Activated naive CD4-positive, alpha-beta T cell treated with anti-CD3 and anti-CD28 coated beads for 36 hours (primary cell): ENCODE measurements at regions of chr5 and their contacts with region 1.

Region 1: GRCh38 chr5:151164686-151165392 is 7.3 kb upstream of the ANXA6 start:
- DNase-seq: peak; percentile 92
- H3K4me3 Mint-ChIP-seq: no peak overlapping the region
- H3K27ac Mint-ChIP-seq: no peak overlapping the region
- H3K4me1 Mint-ChIP-seq: peaks cover 17% of the 10 kb centered on the region
- H3K27me3 Mint-ChIP-seq: no peaks in the 10 kb centered on the region

Region 2: GRCh38 chr5:150801117-150801927 is 363.5 kb before region 1 on chr5:
- CTCF ChIA-PET with region 1: interaction called, 3 read pairs
- intact Hi-C with region 1: loop called (anchors 1 kb)
- DNase-seq: peak; percentile 31
- H3K4me3 Mint-ChIP-seq: no peak overlapping the region
- H3K27ac Mint-ChIP-seq: no peak overlapping the region
- H3K4me1 Mint-ChIP-seq: peaks cover 31% of the 10 kb centered on the region
- H3K27me3 Mint-ChIP-seq: no peaks in the 10 kb centered on the region

Region 3: GRCh38 chr5:151051066-151051930 is 113.5 kb before region 1 on chr5:
- CTCF ChIA-PET with region 1: interaction called, 63 read pairs
- intact Hi-C with region 1: loop called (anchors 1 kb)
- DNase-seq: peak; percentile 85
- H3K4me3 Mint-ChIP-seq: no peak overlapping the region
- H3K27ac Mint-ChIP-seq: peak overlapping the region; percentile 16
- H3K4me1 Mint-ChIP-seq: no peaks in the 10 kb centered on the region
- H3K27me3 Mint-ChIP-seq: no peaks in the 10 kb centered on the region

Region 4: GRCh38 chr5:151126199-151126645 is 38.6 kb before region 1 on chr5:
- CTCF ChIA-PET with region 1: interaction called, 392 read pairs
- intact Hi-C with region 1: loop called (anchors 1 kb)
- DNase-seq: peak; percentile 72
- H3K4me3 Mint-ChIP-seq: no peak overlapping the region
- H3K27ac Mint-ChIP-seq: peak overlapping the region; percentile 90
- H3K4me1 Mint-ChIP-seq: peaks cover 69% of the 10 kb centered on the region
- H3K27me3 Mint-ChIP-seq: no peaks in the 10 kb centered on the region

Region 5: GRCh38 chr5:151183451-151184245 is 18.8 kb after region 1 on chr5:
- CTCF ChIA-PET with region 1: interaction called, 13 read pairs
- intact Hi-C with region 1: no loop called
- DNase-seq: no peak
- H3K4me3 Mint-ChIP-seq: no peak overlapping the region
- H3K27ac Mint-ChIP-seq: no peak overlapping the region
- H3K4me1 Mint-ChIP-seq: peaks cover 11% of the 10 kb centered on the region
- H3K27me3 Mint-ChIP-seq: no peaks in the 10 kb centered on the region

Region 6: DNA sequence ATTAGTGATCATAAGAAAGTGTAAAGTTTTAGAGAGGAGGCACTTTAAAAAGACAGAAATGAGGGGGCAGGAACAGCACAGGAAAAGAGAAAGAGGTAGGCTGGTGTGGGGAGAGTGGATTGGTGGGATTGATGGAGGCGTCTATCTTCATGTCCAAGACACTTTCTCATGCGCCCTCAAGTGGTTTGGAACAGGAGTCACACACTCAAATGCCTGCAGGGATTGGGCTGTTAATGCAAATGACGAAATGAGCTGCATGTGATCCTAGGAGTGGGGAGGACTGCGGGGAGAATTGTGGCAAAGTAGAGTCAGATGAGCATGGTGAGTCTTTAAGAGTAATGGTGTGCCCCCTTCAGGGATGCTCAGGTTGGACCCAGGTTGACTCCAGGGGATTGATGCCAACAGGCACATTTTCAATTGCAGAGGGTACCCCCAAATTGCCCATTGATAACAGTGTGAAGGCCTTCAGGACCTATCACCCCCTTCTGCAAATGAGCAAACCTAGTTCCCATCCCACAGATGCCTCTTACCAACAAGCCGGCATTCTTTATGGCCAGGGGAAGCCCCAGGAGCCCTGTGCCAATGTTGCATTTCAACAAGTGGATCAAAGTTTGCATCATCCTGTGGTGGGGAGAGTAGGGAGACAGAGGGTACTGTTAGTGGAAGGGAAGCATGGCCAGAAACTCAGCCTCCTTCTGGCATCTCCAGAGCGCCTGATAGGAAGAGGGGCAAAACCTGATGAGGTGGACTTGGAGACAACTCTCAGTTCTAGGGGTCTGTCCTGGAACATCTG is 133.4 kb after region 1 on chr5:
- CTCF ChIA-PET with region 1: no interaction called
- intact Hi-C with region 1: loop called (anchors 5 kb)
- DNase-seq: peak; percentile 46
- H3K4me3 Mint-ChIP-seq: no peak overlapping the region
- H3K27ac Mint-ChIP-seq: no peak overlapping the region
- H3K4me1 Mint-ChIP-seq: no peaks in the 10 kb centered on the region
- H3K27me3 Mint-ChIP-seq: peaks cover 3% of the 10 kb centered on the region